ENCODE measurements at regions of chr9 and their contacts with region 1.

Region 1: GRCh38 chr9:21965401-21965951 is 28.7 kb downstream of the CDKN2A start:
- DNase-seq: peak; percentile 68
- H3K4me3 Mint-ChIP-seq: peak overlapping the region; percentile 51
- H3K27ac Mint-ChIP-seq: no peak overlapping the region
- H3K4me1 Mint-ChIP-seq: peaks cover 17% of the 10 kb centered on the region
- H3K27me3 Mint-ChIP-seq: peaks cover 86% of the 10 kb centered on the region

Region 2: GRCh38 chr9:20848490-20848889 is 1117.0 kb before region 1 on chr9:
- CTCF ChIA-PET with region 1: no interaction called
- intact Hi-C with region 1: loop called (anchors 5 kb)
- DNase-seq: no peak
- H3K4me3 Mint-ChIP-seq: no peak overlapping the region
- H3K27ac Mint-ChIP-seq: no peak overlapping the region
- H3K4me1 Mint-ChIP-seq: peaks cover 5% of the 10 kb centered on the region
- H3K27me3 Mint-ChIP-seq: no peaks in the 10 kb centered on the region

Region 3: GRCh38 chr9:21825637-21826036 is 139.8 kb before region 1 on chr9:
- CTCF ChIA-PET with region 1: no interaction called
- intact Hi-C with region 1: no loop called
- DNase-seq: no peak
- H3K4me3 Mint-ChIP-seq: no peak overlapping the region
- H3K27ac Mint-ChIP-seq: no peak overlapping the region
- H3K4me1 Mint-ChIP-seq: peaks cover 29% of the 10 kb centered on the region
- H3K27me3 Mint-ChIP-seq: no peaks in the 10 kb centered on the region

Region 4: GRCh38 chr9:21871256-21871975 is 94.1 kb before region 1 on chr9:
- CTCF ChIA-PET with region 1: no interaction called
- intact Hi-C with region 1: no loop called
- DNase-seq: no peak
- H3K4me3 Mint-ChIP-seq: no peak overlapping the region
- H3K27ac Mint-ChIP-seq: no peak overlapping the region
- H3K4me1 Mint-ChIP-seq: peaks cover 2% of the 10 kb centered on the region
- H3K27me3 Mint-ChIP-seq: no peaks in the 10 kb centered on the region

Region 5: GRCh38 chr9:21919377-21920362 is 45.8 kb before region 1 on chr9:
- CTCF ChIA-PET with region 1: interaction called, 3 read pairs
- intact Hi-C with region 1: loop called (anchors 2 kb)
- DNase-seq: peak; percentile 49
- H3K4me3 Mint-ChIP-seq: no peak overlapping the region
- H3K27ac Mint-ChIP-seq: peak overlapping the region; percentile 37
- H3K4me1 Mint-ChIP-seq: peaks cover 14% of the 10 kb centered on the region
- H3K27me3 Mint-ChIP-seq: no peaks in the 10 kb centered on the region

Region 6: DNA sequence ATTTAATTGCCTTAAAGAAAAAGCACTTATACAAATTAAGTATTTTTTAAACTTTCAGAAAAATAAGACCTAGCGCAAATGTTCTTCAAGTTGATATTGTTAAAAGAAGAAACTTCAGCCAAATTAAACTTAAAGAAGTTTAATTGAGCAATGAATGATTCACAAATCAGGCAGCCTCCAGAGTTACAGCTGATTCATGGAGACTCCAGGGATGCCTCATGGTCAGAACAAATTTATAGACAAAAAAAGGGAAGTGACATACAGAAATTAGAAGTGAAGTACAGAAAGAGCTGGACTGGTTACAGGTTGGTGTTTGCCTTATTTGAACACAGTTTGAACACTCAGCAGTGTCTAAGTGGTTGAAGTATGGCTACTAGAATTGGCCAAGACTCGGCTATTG is 31.6 kb before region 1 on chr9:
- CTCF ChIA-PET with region 1: no interaction called
- intact Hi-C with region 1: no loop called
- DNase-seq: no peak
- H3K4me3 Mint-ChIP-seq: no peak overlapping the region
- H3K27ac Mint-ChIP-seq: no peak overlapping the region
- H3K4me1 Mint-ChIP-seq: no peaks in the 10 kb centered on the region
- H3K27me3 Mint-ChIP-seq: no peaks in the 10 kb centered on the region